AG04450 (cell line): ENCODE measurements at regions of chr5 and their contacts with region 1.

Region 1: DNA sequence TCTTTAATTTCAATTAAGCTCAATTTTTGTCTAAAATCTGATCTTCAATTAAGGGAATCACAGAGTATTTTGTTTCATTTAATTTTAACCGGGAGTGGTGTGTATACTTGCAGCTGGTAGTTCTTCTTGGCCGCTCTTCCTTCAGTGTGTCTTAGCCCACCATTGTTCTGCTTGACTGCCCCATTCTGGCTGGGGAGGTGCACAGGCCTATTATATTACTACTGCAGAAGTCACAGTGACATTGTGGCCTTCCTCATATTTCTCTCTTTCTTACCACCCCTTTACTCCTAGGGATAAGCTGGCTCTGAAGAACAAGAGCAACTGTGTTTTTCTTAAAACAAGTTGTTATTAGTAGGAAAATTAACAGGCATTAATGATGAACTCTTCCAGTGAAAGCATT is 123.7 kb downstream of the ATG10 start:
- DNase-seq: no peak
- H3K4me3 ChIP-seq: no peak overlapping the region
- H3K27ac ChIP-seq: no peak overlapping the region
- H3K27me3 ChIP-seq: no peaks in the 10 kb centered on the region
- CTCF ChIP-seq: no peak

Region 2: DNA sequence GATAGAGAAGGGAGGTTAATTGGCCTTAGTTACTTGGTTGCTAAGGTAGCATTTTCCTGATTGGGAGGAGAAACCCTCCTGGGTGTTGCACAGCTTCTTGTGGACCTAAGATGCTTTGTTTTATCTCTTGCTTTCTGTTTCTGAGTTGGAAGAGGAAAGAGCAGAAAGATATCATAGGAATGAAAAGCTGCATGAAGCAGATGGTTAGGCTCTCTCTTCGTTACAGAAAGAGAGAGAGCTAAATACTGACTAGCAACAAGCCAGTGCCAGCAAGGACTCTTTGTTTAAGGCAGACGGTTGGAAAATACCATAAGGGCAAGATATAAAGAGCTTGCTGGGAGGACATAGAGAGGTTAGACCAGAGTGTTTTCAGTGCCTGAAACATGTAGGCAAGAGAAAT is 20.6 kb before region 1 on chr5:
- CTCF ChIA-PET with region 1: no interaction called
- POLR2A ChIA-PET with region 1: no interaction called
- DNase-seq: no peak
- H3K4me3 ChIP-seq: no peak overlapping the region
- H3K27ac ChIP-seq: no peak overlapping the region
- H3K27me3 ChIP-seq: no peaks in the 10 kb centered on the region
- CTCF ChIP-seq: no peak

Region 3: GRCh38 chr5:82107267-82107666 is 11.7 kb after region 1 on chr5:
- CTCF ChIA-PET with region 1: interaction called, 12 read pairs
- POLR2A ChIA-PET with region 1: no interaction called
- DNase-seq: no peak
- H3K4me3 ChIP-seq: no peak overlapping the region
- H3K27ac ChIP-seq: no peak overlapping the region
- H3K27me3 ChIP-seq: no peaks in the 10 kb centered on the region
- CTCF ChIP-seq: peak; percentile 49

Region 4: GRCh38 chr5:82295144-82295543 is 199.6 kb after region 1 on chr5:
- CTCF ChIA-PET with region 1: no interaction called
- POLR2A ChIA-PET with region 1: no interaction called
- DNase-seq: no peak
- H3K4me3 ChIP-seq: no peak overlapping the region
- H3K27ac ChIP-seq: no peak overlapping the region
- H3K27me3 ChIP-seq: no peaks in the 10 kb centered on the region
- CTCF ChIP-seq: no peak